ENCODE measurements at regions of chr17 and their contacts with region 1.

Region 1: GRCh38 chr17:75319904-75320691 is 30.9 kb upstream of the SLC25A19 start:
- DNase-seq: no peak
- H3K4me3 Mint-ChIP-seq: no peak overlapping the region
- H3K27ac Mint-ChIP-seq: peak overlapping the region; percentile 28
- H3K4me1 Mint-ChIP-seq: peaks cover 19% of the 10 kb centered on the region
- H3K27me3 Mint-ChIP-seq: no peaks in the 10 kb centered on the region

Region 2: DNA sequence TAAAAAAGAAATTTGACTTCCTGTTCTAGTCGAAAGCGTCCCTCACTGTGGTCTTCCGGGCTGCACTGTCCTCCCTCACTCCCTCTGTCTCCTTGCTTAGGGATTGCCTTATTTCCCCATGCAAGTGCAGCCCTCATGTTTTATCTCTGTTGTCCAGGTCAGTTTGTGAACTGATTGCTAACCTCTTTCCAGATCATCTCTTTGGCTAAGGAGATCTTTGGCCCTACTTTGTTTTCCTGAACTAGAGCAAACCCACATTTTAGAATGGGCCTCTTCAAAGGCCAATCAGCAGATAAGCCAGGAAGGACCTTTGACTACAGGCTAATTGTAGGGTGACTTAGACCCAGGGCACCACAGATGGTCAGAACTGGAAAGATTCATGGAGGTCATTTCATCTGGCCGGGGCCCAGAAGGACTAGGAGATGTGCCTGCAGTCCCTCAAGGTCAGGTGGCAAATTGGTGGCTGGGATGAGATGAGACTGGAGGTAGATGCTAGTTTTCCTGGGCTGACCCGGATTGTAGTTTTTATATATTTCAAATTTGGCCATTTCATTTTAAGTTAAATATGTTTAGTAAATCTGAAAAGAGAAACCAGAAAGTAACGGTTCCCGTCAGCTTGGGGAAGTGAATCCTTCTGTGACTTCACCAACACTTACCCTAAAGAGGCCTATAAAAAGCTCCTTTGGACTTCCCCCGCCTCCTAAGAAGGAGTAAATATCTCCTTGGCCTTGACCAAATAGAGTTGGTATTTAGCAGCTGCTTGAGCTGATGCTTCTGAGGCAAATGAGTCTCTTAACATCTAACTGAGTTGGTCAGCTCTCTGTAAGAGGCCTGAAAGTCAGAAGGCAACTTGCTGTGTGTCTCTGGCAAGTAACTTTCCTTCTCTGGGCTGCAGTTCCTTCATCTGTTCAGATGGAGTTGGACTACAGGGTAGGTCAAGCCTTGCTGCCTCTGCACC is 24.6 kb before region 1 on chr17:
- CTCF ChIA-PET with region 1: interaction called, 16 read pairs
- POLR2A ChIA-PET with region 1: interaction called, 7 read pairs
- intact Hi-C with region 1: loop called (anchors 1 kb)
- DNase-seq: peak; percentile 58
- H3K4me3 Mint-ChIP-seq: peak overlapping the region; percentile 37
- H3K27ac Mint-ChIP-seq: peak overlapping the region; percentile 99
- H3K4me1 Mint-ChIP-seq: peaks cover 35% of the 10 kb centered on the region
- H3K27me3 Mint-ChIP-seq: no peaks in the 10 kb centered on the region

Region 3: DNA sequence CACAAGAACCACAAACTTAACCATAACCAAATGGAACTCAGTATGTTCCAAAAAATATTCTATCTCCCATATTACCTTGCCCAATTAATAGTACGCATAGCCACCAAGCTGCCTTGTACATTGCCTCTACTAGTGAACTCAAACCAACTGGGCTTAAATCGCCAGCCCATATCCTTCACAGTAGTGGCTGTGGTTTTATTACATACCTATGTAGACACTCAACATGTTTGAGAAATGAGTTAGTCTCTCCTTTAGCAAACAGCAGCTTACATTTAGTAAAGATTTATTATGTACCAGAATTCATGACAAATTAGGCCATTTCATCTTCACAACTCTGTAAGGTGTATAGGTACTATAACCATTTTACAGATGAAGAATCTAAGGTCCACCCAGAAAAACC is 44.0 kb after region 1 on chr17:
- CTCF ChIA-PET with region 1: interaction called, 10 read pairs
- POLR2A ChIA-PET with region 1: no interaction called
- intact Hi-C with region 1: loop called (anchors 5 kb)
- DNase-seq: no peak
- H3K4me3 Mint-ChIP-seq: no peak overlapping the region
- H3K27ac Mint-ChIP-seq: peak overlapping the region; percentile 34
- H3K4me1 Mint-ChIP-seq: peaks cover 95% of the 10 kb centered on the region
- H3K27me3 Mint-ChIP-seq: no peaks in the 10 kb centered on the region

Region 4: DNA sequence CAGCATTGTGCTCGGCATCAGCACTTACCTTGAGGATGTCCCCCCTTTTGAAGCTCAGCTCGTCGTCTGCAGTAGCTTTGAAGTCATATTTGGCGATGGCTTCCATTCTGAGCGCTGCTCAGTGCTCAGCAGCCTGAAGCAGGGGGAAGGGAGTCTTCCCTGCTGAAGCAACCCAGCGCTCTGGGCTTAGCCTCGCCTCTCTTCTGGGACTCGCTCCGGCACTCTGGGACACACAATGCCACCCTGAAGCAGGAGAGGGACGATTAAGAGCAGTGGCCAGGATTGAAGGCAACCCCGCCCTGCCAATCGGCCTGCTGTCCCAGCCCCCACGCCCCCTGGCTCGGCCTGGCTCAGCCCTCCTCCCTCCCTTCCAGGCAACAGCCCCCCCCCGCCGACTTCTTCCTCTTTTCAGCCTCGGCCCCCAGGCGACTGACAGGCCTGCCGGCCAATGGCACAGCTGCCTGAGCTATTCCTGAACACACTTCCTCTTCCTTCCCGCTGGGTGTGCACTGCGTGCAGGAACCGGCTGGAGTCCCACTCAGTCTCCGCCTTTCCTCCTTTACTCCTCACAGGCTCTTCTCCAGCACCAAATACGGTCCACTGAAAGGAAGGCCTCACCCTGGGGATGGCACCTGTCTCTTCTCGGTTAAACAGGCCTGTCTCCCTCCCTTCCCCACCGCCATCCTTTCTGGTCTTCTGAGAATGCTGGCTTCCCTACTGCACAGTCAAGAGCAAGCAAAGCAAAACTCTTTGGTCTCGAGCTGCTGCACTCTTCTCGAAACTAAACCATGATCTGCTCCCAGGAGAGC is 73.6 kb after region 1 on chr17:
- CTCF ChIA-PET with region 1: interaction called, 31 read pairs
- POLR2A ChIA-PET with region 1: interaction called, 6 read pairs
- intact Hi-C with region 1: no loop called
- DNase-seq: peak; percentile 91
- H3K4me3 Mint-ChIP-seq: peak overlapping the region; percentile 96
- H3K27ac Mint-ChIP-seq: peak overlapping the region; percentile 85
- H3K4me1 Mint-ChIP-seq: peaks cover 76% of the 10 kb centered on the region
- H3K27me3 Mint-ChIP-seq: no peaks in the 10 kb centered on the region

Region 5: DNA sequence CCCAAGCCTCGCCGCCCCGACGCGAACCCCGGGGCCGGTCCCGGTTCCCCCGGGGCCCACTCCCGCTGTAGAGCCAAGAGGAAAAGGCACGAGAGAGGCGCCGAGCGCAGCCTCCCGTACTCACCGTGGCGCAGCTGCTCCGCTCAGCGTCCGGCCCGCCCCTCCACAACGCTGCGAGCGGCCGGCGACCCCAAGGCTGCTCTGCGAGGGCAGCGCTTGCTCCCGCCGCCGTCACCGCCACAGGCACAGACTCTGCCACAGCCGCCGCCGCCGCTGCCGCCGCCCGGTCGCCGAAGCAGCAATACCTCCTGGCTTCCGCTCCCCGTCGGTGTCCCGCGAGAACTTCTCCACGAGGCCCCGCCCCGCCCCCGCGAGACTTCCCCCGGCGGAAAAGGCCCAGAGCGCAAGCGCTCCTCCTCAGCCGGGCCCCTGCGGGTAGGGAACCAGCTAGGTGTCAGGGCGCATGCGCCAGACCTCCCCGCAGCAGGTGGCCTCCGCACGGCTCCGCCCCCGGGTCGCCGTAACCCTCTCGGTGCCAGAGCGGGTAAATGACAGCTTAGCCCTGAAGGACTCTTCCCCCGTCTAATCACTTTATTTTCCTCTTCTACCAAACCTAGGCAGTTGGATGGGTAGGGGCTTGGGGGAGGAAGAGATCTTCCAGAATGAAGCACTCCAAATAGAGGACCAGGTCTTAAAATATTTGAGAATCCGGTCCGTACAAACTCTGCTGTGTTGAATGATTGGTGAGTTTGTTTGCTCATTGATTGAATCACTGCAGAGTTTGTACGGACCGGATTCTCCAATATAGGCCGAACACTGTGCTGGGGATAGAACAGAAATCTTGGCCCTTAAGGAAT is 85.5 kb after region 1 on chr17 and contains the start of gene GRB2:
- CTCF ChIA-PET with region 1: interaction called, 21 read pairs
- POLR2A ChIA-PET with region 1: no interaction called
- intact Hi-C with region 1: loop called (anchors 1 kb)
- DNase-seq: peak; percentile 100
- H3K4me3 Mint-ChIP-seq: peak within 1 kb of the TSS; percentile 89
- H3K27ac Mint-ChIP-seq: peak within 1 kb of the TSS; percentile 95
- H3K4me1 Mint-ChIP-seq: peaks cover 31% of the 10 kb centered on the region
- H3K27me3 Mint-ChIP-seq: no peaks in the 10 kb centered on the region
- total RNA-seq, gene GRB2: 174 to 182 TPM

Region 6: DNA sequence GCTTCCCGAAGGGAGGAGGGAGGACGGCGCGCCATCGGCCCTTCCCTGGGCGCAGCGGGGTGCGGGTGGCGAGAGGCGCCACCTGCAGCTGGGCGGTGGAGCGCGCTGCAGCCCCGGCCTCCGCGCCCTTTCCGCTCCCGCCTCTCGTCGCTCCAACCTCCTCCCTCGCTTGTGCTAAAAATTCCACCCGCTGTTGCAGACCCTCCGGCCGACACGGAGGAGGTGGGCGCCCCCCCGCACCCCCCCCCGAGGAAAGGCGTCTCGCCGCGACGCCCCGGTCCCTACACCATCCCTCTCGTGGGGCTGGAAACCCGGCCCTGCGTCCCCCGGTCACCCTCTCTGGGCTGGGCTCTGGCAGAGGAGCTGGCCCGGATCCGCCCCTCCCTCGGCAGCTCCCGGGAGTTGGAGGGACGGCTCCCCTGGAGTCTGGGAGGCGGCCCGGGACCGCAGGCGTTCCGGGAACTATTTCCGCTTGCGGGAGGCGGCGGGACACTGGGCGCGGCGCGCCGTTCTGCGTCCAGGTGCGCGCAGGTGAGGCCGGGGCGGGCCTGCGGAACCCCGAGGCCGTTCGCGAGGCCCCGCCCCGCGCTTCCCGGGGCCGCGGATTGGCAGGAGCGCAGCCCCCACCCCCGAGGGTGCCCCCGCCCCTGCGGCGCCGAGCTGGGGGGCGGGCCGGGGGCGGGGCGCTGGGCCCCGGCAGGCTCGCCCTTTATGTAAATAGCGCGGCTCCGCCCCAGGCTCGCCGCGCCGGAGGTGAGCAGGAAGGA is 205.0 kb after region 1 on chr17 and contains the start of gene LLGL2:
- CTCF ChIA-PET with region 1: no interaction called
- POLR2A ChIA-PET with region 1: no interaction called
- intact Hi-C with region 1: no loop called
- DNase-seq: peak; percentile 86
- H3K4me3 Mint-ChIP-seq: peak within 1 kb of the TSS; percentile 68
- H3K27ac Mint-ChIP-seq: no peak within 1 kb of the TSS
- H3K4me1 Mint-ChIP-seq: peaks cover 12% of the 10 kb centered on the region
- H3K27me3 Mint-ChIP-seq: no peaks in the 10 kb centered on the region
- total RNA-seq, gene LLGL2: 15.6 to 17.1 TPM

Region 7: GRCh38 chr17:75737133-75737962 is 417.2 kb after region 1 on chr17:
- CTCF ChIA-PET with region 1: no interaction called
- POLR2A ChIA-PET with region 1: no interaction called
- intact Hi-C with region 1: no loop called
- DNase-seq: no peak
- H3K4me3 Mint-ChIP-seq: no peak overlapping the region
- H3K27ac Mint-ChIP-seq: no peak overlapping the region
- H3K4me1 Mint-ChIP-seq: peaks cover 5% of the 10 kb centered on the region
- H3K27me3 Mint-ChIP-seq: no peaks in the 10 kb centered on the region